H1 (cell line): ENCODE measurements at regions of chr7 and their contacts with region 1.

Region 1: DNA sequence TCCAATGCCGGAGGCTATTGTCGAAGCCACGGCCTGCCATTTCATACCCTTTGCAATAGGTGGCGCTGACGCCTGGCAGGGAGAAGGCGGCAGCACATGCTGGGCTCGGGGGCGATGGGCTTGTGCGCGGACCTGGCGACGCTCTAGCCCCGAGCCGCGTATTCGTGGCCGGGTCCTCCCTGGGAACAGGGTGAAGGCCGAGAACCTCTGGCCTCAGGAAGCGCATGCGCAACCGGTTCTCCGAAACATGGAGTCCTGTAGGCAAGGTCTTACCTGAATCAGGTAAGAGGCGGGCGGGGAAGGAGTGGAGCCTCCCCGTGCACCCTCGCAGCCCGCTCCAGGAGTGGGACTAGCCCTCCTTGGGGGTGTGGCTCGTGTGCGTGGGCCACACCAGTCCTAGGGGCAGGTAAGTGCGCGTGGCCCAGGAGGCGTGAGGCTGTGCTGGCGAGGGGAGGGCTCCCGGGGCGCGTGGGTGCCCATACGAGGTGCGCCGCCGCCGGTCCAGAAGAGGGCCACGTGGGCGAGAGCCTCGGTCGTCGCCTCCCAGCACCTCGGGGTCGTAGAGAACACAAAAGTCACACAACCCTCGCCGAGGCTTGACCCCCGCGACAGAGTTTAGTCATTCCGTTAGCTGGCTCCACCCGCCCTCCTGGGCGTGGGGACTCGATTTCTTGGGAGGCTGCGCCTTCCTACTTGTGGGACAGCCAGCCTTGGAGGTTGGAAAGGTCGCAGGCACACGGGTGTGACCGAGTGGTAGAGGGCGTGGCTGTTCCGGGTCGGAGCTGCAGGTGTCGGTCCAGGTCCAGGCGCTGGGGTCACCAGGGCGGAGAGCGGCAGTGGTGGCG is 5.5 kb upstream of the MEST start:
- DNase-seq: peak; percentile 87 to 94
- H3K4me3 ChIP-seq: peak overlapping the region; percentile 58 to 85 (median 74)
- H3K27ac ChIP-seq: no peak overlapping the region; the same call in 1 of the 2 replicates
- H3K4me1 ChIP-seq: peaks cover 0 to 10% (median 5%) of the 10 kb centered on the region in 4 experiments; a peak in 6 of 7 replicates
- H3K27me3 ChIP-seq: peaks cover 0 to 4% (median 0%) of the 10 kb centered on the region in 4 experiments; a peak in 2 of 7 replicates
- CTCF ChIP-seq: peak; percentile 78 to 89 (median 82)
- EP300 ChIP-seq: peak in 1 of 2 experiments; percentile 38; a peak in 1 of 3 replicates
- POLR2A ChIP-seq: peak in 1 of 2 experiments; percentile 78; a peak in 2 of 3 replicates
- RAD21 ChIP-seq: peak; percentile 68 to 73

Region 2: DNA sequence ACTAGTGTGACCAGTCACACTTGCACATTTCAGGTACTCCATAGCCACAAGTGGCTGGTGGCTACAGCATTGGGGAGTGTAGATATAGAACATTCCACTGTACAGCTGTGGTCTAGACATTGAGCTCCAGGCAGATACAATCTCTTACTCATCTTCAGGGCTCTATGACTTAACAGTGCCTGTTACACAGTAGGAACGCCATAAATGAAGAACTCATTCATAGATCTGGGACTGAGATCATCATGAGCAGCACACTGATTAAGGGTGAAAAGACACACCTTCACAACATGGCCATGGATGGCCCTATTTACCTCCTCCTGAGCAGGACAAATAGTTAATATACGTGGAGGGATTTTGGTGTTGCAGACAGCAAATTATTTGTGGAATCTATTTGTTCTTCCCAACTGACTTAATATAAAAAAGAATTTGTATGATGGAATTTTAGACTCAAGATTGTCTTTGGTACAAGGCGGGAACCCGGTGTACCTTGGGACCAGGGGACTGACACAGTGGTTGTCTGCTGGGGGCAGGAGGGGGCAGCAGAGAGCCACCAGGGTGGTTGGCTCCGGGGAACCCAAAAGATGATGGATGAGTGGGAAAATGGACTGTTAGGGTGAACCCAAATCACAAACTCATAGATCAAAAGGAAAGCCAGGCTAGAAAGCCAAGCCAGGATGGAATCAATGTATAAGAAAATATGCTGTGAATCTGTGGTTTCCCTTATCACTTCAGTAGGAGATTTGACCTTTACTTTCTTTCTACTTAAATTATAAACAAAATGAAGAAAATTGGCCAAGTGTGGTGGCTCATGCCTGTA is 243.9 kb before region 1 on chr7:
- CTCF ChIA-PET with region 1: interaction called, 15 read pairs
- POLR2A ChIA-PET with region 1: interaction called, 3 read pairs
- DNase-seq: peak in 1 of 2 experiments; percentile 85
- H3K4me3 ChIP-seq: no peak overlapping the region
- H3K27ac ChIP-seq: no peak overlapping the region
- H3K4me1 ChIP-seq: no peaks in the 10 kb centered on the region
- H3K27me3 ChIP-seq: no peaks in the 10 kb centered on the region
- CTCF ChIP-seq: peak; percentile 86 to 98 (median 88)
- EP300 ChIP-seq: no peak
- POLR2A ChIP-seq: no peak
- RAD21 ChIP-seq: peak; percentile 98 to 99

Region 3: GRCh38 chr7:130440527-130441365 is 45.6 kb before region 1 on chr7 and contains the start of gene CEP41:
- CTCF ChIA-PET with region 1: interaction called, 4 read pairs
- POLR2A ChIA-PET with region 1: interaction called, 12 read pairs
- DNase-seq: peak; percentile 96 to 98
- H3K4me3 ChIP-seq: peak within 1 kb of the TSS; percentile 60 to 76 (median 70)
- H3K27ac ChIP-seq: peak within 1 kb of the TSS; percentile 99
- H3K4me1 ChIP-seq: peaks cover 5 to 12% (median 7%) of the 10 kb centered on the region in 4 experiments; a peak in 6 of 7 replicates
- H3K27me3 ChIP-seq: no peaks in the 10 kb centered on the region; a peak in 1 of 7 replicates
- CTCF ChIP-seq: no peak
- EP300 ChIP-seq: no peak
- POLR2A ChIP-seq: peak in 1 of 2 experiments; percentile 85; a peak in 2 of 3 replicates
- RAD21 ChIP-seq: no peak
- total RNA-seq, gene CEP41: 12.8 and 13.3 TPM in 2 replicates